ENCODE measurements at regions of chr15 and their contacts with region 1.

Region 1: GRCh38 chr15:101008158-101009139 is 89.3 kb downstream of the LRRK1 start:
- DNase-seq: peak; percentile 73 to 76
- H3K4me3 ChIP-seq: peak overlapping the region in 1 of 2 donors; percentile 34
- H3K27ac ChIP-seq: peak overlapping the region in 1 of 2 donors; percentile 50
- H3K4me1 ChIP-seq: no peaks in the 10 kb centered on the region
- H3K27me3 ChIP-seq: no peaks in the 10 kb centered on the region
- CTCF ChIP-seq: peak; percentile 83 to 97 (median 88)
- POLR2A ChIP-seq: no peak

Region 2: DNA sequence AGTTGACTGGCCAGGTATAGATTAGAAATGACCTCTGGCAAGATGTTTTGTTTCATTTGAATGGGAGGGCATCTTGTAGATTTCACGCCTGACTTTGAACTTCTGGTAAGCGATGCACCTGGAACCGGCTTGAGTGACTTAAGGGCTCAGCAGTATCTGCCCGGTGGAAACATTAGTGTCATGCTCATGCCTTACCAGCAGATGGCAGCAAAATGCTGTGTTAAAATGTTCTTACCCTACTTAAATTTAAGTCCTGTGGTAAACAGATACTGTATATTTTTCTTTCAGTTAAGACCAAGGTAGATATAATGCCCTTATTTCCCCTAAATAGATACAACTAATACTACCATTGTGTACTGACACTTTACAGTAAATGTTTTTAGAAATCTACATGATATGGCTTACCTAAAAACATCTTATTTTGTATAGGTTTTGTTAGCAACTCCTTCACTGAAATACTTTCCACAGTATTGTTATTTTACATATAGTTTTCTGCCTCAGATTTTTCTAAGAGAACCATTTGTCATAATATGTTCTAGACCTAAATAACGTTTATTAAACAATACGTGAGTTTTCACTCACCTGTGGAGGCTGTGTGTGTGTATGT is 380.6 kb before region 1 on chr15:
- intact Hi-C with region 1: loop called (anchors 10 kb)
- DNase-seq: peak; percentile 67 to 78
- H3K4me3 ChIP-seq: no peak overlapping the region
- H3K27ac ChIP-seq: peak overlapping the region; percentile 1 to 45
- H3K4me1 ChIP-seq: no peaks in the 10 kb centered on the region
- H3K27me3 ChIP-seq: no peaks in the 10 kb centered on the region
- CTCF ChIP-seq: peak; percentile 77 to 90 (median 88)
- POLR2A ChIP-seq: no peak

Region 3: GRCh38 chr15:100721770-100722550 is 286.5 kb before region 1 on chr15:
- intact Hi-C with region 1: no loop called
- DNase-seq: peak; percentile 90 to 95
- H3K4me3 ChIP-seq: no peak overlapping the region
- H3K27ac ChIP-seq: peak overlapping the region; percentile 93 to 96
- H3K4me1 ChIP-seq: peaks cover 0 to 13% of the 10 kb centered on the region in 2 donors
- H3K27me3 ChIP-seq: no peaks in the 10 kb centered on the region
- CTCF ChIP-seq: no peak
- POLR2A ChIP-seq: no peak

Region 4: DNA sequence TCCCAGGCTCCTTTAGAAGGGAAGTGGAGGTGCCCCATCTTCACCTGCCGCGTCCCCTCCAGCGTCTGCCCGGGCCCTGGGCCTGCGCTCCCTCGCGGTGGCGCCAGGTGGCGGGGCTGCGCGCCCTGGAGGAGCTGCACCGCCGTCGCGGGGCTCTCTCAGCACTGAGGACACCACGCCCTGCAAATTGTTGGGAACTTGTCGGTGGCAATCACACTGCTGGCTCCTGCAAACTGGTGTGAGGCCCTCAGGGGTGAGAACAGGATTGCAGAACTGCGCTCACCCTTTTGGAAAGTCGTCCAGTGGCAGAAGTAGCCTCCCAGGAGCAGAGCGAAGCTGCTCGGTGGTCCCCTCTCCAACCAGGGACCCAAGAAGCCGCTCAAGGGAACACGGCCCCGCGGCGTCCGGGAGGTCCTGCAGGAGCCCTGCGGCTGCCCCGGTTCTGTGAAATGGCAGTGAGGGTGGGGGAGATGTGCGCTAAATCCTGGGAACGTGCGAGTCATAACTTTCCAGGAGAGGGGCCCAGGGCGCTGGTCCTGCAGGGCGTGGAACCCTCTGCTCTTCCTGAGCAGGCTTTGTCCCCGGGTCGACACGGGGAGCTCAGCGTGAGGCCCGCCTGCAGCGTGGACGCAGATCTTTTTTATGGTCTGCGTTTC is 90.3 kb before region 1 on chr15:
- intact Hi-C with region 1: loop called (anchors 5 kb)
- DNase-seq: peak; percentile 69 to 74
- H3K4me3 ChIP-seq: peak overlapping the region; percentile 71 to 82
- H3K27ac ChIP-seq: peak overlapping the region; percentile 78 to 89
- H3K4me1 ChIP-seq: peaks cover 0 to 5% of the 10 kb centered on the region in 2 donors
- H3K27me3 ChIP-seq: no peaks in the 10 kb centered on the region
- CTCF ChIP-seq: peak; percentile 91 to 98 (median 95)
- POLR2A ChIP-seq: peak in 1 of 2 donors; percentile 25

Measured in uterus (tissue), 4 donors.